Left cardiac atrium (tissue), 4 donors: ENCODE measurements at regions of chrX and their contacts with region 1.

Region 1: GRCh38 chrX:57918750-57919436 is 8.6 kb upstream of the ZXDA start:
- DNase-seq: peak; percentile 29
- ATAC-seq: peak; percentile 37 to 65

Region 2: GRCh38 chrX:56920338-56920997 is 998.4 kb before region 1 on chrX:
- intact Hi-C with region 1: no loop called
- DNase-seq: no peak
- ATAC-seq: no peak

Region 3: DNA sequence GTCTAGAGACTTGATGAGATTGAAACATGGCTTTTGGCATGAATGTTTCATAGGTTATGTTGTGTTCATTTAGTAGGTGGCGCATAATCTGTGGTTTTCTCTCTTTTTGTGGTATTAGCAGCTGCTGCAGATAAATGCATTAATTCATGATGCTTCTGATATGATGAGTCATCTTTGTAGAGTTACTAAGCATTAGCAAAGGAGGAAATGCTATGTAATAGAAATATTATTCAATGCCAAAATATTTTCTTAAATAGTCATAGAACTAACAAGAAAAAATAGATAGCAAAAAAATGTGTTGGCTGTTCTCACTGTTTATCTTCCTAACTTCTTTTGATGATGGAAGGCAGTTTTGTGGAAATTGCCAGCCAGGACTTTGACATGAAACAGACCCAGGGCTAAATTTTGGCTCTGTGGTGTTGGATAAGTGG is 323.5 kb before region 1 on chrX:
- intact Hi-C with region 1: loop called in 1 of 2 experiments (anchors 5 kb)
- DNase-seq: no peak
- ATAC-seq: peak in 1 of 2 donors; percentile 5

Region 4: DNA sequence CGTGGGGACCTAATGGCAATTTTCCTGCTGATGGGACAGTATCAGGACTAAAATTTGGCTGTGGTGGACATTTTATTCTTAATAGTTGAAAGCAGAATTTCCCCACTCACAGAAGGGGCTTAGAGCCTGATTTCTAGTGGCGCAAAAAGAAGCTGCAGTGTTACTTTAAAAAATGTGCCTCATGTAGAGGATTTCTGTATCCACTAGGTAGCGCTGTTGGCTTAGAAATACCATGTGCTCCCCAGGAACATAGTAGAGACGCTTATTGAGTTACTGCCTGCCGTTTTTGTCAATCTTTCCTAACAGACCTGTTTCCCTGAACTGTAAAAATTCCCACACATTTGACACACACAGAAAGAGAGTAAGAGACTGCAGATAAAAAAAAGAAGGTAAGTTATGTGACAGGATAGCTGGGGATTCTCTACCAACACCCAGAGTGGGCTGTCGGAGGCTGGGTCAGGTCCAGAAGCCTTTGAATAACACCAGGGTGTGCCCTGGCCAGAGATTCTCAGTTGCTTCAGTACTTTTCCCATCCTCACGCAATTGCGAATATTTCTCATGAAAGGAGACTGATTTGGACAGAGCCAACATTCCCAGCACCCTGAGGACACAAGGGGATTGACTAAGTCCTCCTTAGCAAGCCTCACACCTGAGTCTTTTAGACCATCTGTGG is 97.1 kb before region 1 on chrX:
- intact Hi-C with region 1: loop called (anchors 2 to 5 kb)
- DNase-seq: no peak
- ATAC-seq: peak; percentile 73 to 79

Region 5: DNA sequence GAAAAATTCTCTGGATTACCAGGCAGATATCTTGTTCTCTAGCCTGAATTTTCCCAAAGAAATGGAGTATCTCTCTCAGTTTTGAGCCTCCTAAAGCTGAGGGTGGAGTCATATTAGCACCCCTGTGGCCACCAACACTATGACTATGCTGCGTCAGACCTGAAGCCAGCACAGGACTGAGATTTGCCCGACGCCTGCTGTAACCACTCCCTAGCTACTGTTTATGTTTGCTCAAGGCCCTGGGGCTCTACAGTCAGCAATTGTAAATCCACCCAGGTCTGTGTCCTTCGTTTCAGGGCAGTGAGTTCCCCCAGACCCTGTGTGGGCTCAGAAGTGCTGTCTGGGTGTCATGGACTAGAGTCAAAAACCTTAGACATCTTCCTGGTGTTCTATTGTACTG is 70.0 kb before region 1 on chrX:
- intact Hi-C with region 1: loop called in 1 of 2 experiments (anchors 5 kb)
- DNase-seq: no peak
- ATAC-seq: no peak